ENCODE measurements at regions of chr9 and their contacts with region 1.

Region 1: DNA sequence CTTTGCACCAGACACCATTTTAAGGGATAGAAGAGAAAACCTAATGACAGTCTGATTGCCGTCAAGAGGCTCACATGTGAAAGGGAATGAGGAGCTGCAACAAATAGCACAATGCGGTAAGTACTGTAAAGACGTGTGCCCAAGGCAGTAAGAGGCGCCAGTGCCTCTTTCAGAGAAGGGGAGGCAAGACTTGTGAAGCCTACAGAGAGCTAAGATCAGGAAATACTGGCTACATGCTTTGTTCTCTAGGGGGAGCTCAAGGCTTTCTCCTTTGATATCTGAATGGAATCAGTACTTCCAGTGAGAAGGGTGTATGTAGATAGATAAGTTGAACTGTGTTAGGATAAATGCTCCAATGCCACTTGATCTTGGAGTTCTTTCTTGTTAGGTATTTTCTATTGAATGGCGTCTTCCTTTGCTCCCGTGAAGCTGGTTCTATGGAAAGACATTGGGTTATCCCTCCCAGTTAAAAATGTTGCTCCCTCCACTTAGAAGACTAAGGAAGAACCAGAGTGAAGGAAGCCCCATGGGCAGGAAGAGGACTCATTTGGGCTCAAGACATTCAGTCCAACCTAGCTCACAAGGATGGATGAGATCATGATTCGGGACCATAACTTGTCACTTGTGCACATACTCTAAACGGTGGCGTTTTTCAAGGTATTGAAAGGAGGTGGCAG is 23.5 kb upstream of the ALDOB start:
- DNase-seq: peak; percentile 78 to 87 (median 82)
- H3K4me3 ChIP-seq: no peak overlapping the region
- H3K27ac ChIP-seq: no peak overlapping the region
- H3K4me1 ChIP-seq: peaks cover 0 to 2% (median 0%) of the 10 kb centered on the region in 4 experiments
- H3K27me3 ChIP-seq: peaks cover 0 to 8% (median 0%) of the 10 kb centered on the region in 5 experiments

Region 2: DNA sequence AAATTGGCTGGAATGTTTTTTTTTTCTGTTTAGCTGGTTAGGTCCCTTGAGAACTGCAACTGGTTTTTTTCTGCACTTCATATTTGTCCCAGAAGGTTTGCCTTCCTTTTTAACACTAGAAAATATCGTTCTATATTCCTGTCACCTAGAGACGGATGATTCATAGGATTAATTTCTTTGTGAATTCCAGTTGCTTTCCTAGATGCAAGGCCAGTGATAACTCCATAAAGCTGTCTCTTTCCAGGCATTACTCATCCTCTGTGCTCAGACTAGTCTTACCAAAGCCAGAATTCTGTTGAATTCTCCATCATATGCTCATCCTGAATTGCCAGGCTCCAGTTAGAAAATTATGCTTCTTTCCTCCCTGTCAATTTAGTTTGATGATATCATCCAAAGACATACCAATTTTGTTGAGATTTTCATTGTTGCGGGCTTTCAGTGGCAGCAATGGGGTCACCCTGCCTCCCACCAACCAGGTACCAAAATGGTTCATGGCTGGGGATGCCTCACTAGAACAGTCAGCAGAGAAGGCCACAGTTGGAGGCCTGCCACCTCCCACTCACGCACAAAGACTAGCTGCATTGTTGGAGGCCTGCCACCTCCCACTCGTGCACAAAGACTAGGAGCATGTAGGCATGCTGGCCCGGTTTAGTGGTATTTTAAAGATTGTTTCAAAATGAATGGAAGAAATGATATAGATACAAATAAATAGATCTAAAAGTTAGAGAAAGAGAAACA is 82.8 kb before region 1 on chr9:
- CTCF ChIA-PET with region 1: no interaction called
- POLR2A ChIA-PET with region 1: no interaction called
- DNase-seq: no peak
- H3K4me3 ChIP-seq: no peak overlapping the region
- H3K27ac ChIP-seq: no peak overlapping the region
- H3K4me1 ChIP-seq: no peaks in the 10 kb centered on the region
- H3K27me3 ChIP-seq: no peaks in the 10 kb centered on the region

Region 3: GRCh38 chr9:101432171-101432570 is 26.9 kb before region 1 on chr9:
- CTCF ChIA-PET with region 1: no interaction called
- POLR2A ChIA-PET with region 1: no interaction called
- DNase-seq: no peak
- H3K4me3 ChIP-seq: no peak overlapping the region
- H3K27ac ChIP-seq: no peak overlapping the region
- H3K4me1 ChIP-seq: no peaks in the 10 kb centered on the region
- H3K27me3 ChIP-seq: peaks cover 0 to 9% (median 0%) of the 10 kb centered on the region in 5 experiments

Region 4: DNA sequence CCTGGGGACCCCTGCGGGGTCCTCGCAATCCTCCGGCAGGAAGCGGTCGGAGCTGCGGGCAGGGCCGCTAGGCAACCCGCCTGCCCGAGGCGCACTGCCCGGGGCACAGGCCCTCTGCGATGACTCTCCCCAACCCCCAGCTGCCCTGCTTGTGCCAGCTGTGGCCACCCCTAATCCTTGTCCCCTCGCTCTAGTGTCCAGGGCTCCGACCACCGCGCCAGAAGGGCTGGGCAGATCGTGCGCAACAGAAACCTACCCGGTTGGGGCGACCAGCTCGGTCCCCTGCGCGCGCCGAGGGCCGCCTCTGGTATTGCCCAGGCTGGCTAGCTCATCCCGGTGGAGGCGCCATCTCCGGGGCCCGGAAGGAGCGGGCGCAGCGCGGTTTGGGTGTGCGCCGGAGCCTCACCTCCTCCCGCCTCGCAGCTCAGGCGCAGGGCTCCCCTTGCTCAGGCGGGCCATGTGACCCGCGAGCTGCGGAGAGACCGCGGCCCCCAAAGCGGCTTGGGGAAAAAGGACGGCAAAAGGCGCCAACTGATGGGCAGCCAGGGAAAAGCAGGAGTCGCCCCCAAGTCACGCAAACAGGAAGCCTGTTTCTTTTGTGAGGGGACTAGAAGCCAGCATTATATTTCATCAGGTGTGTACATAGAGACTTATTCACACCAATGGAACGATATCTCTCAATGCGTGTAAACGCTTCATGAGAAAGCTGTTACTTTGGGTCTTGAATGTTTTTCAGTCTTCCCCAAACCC is 27.8 kb after region 1 on chr9:
- CTCF ChIA-PET with region 1: interaction called, 35 read pairs
- POLR2A ChIA-PET with region 1: no interaction called
- DNase-seq: peak; percentile 73 to 85 (median 84)
- H3K4me3 ChIP-seq: peak overlapping the region; percentile 56 to 96 (median 80)
- H3K27ac ChIP-seq: peak overlapping the region; percentile 51 to 77
- H3K4me1 ChIP-seq: peaks cover 0 to 32% (median 14%) of the 10 kb centered on the region in 4 experiments
- H3K27me3 ChIP-seq: peaks cover 0 to 18% (median 0%) of the 10 kb centered on the region in 5 experiments

Region 5: GRCh38 chr9:101590901-101591300 is 131.8 kb after region 1 on chr9:
- CTCF ChIA-PET with region 1: no interaction called
- POLR2A ChIA-PET with region 1: no interaction called
- DNase-seq: no peak
- H3K4me3 ChIP-seq: no peak overlapping the region
- H3K27ac ChIP-seq: no peak overlapping the region
- H3K4me1 ChIP-seq: no peaks in the 10 kb centered on the region
- H3K27me3 ChIP-seq: no peaks in the 10 kb centered on the region

Region 6: GRCh38 chr9:101601904-101602765 is 143.0 kb after region 1 on chr9:
- CTCF ChIA-PET with region 1: no interaction called
- POLR2A ChIA-PET with region 1: no interaction called
- DNase-seq: peak; percentile 42 to 63 (median 59)
- H3K4me3 ChIP-seq: peak overlapping the region in 1 of 7 experiments; percentile 60
- H3K27ac ChIP-seq: no peak overlapping the region
- H3K4me1 ChIP-seq: peaks cover 0 to 12% (median 0%) of the 10 kb centered on the region in 4 experiments
- H3K27me3 ChIP-seq: peaks cover 0 to 4% (median 0%) of the 10 kb centered on the region in 5 experiments

Measured in common myeloid progenitor, CD34-positive (primary cell).